ENCODE measurements at regions of chr6 and their contacts with region 1.

Region 1: GRCh38 chr6:44172731-44173500 is 14.3 kb downstream of the CAPN11 start:
- DNase-seq: peak; percentile 61 to 95
- H3K4me3 ChIP-seq: no peak overlapping the region
- H3K27ac ChIP-seq: no peak overlapping the region
- H3K4me1 ChIP-seq: peaks cover 3 to 14% of the 10 kb centered on the region in 2 donors
- H3K27me3 ChIP-seq: no peaks in the 10 kb centered on the region
- CTCF ChIP-seq: peak; percentile 93 to 94 (median 93)

Region 2: GRCh38 chr6:44127186-44128019 is 45.5 kb before region 1 on chr6 and contains the starts of genes MRPL14 and TMEM63B:
- intact Hi-C with region 1: no loop called
- DNase-seq: peak; percentile 43 to 91
- H3K4me3 ChIP-seq: peak within 1 kb of the TSS; percentile 85 to 86
- H3K27ac ChIP-seq: peak within 1 kb of the TSS; percentile 81 to 84
- H3K4me1 ChIP-seq: peaks cover 0 to 23% of the 10 kb centered on the region in 2 donors
- H3K27me3 ChIP-seq: no peaks in the 10 kb centered on the region
- CTCF ChIP-seq: no peak
- total RNA-seq, gene MRPL14: 61.8 TPM
- total RNA-seq, gene TMEM63B: 9.6 TPM

Region 3: DNA sequence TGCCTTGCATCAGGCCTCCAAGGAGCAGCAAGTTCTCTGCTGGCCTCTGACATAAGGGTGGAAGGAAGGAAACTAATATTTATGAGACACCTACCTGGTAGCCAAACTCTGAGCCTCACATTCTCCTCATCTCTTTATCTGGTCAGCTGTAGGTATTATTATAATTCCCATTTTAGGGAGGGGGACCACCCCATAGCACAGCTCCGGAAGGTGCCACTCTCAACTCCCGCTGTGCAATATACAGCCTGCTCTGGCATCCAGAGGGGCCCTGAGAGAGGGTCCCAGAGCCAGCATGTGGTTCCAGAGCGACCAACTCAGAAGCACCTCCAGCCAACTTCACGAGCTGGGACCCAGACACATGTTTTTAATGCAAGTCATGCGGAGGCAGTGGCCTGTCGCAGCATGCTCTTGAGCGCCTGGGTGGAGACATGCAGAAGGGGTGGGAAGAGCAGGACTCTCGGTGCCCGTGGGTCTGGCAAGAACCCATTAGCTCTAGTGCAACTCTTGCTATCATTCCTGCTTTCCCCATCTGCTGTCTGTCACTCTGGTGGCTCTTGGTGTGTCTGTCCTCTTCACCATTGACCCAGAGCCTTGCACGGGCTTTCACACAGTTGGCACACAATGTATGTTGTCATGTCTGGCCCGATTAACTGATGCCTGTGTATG is 28.9 kb after region 1 on chr6:
- intact Hi-C with region 1: loop called (anchors 2 kb)
- DNase-seq: no peak
- H3K4me3 ChIP-seq: no peak overlapping the region
- H3K27ac ChIP-seq: no peak overlapping the region
- H3K4me1 ChIP-seq: peaks cover 0 to 10% of the 10 kb centered on the region in 2 donors
- H3K27me3 ChIP-seq: no peaks in the 10 kb centered on the region
- CTCF ChIP-seq: no peak

Region 4: GRCh38 chr6:44237813-44238433 is 65.0 kb after region 1 on chr6:
- intact Hi-C with region 1: loop called (anchors 1 kb)
- DNase-seq: peak; percentile 72 to 93
- H3K4me3 ChIP-seq: peak overlapping the region; percentile 51 to 79
- H3K27ac ChIP-seq: peak overlapping the region; percentile 97 to 100
- H3K4me1 ChIP-seq: peaks cover 25 to 50% of the 10 kb centered on the region in 2 donors
- H3K27me3 ChIP-seq: no peaks in the 10 kb centered on the region
- CTCF ChIP-seq: peak; percentile 97 to 99 (median 98)

Region 5: DNA sequence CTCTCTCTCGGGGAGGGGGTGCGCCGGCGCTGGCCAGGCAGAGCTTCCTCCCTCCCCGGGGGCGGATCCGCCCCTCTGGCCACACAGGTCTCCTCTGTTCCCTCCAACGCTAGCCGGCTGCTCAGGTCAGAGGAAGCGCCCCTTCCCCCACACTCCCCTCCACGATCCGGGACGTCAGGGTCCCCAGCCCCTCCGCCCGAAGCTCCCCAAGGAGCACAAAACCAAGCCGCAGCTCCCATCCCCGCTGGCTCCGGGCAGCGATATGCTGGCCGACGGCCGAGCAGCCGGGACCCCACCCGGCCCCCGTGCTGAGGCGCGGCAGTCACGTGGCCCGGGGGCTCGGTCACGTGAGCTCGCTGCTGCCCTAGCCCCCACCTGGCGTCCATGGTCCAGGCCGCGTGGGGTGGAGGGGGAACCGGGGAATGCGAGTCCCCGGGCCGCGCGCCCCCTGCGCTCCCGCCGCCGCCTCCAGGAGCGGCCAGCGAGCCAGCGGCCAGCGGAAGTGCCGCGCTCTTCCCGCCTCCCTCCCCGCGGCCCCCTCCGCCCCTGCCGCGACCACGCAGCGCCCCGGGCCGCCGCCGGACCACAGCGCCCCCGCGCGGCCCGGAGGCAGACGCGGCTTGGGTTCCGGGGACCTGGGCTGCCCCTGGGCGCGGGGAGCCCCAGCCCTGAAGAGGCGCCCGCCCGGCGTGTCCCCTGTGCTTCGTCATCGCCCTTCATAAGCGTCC is 84.3 kb after region 1 on chr6 and contains the start of gene SLC35B2:
- intact Hi-C with region 1: loop called (anchors 1 kb)
- DNase-seq: peak in 1 of 2 donors; percentile 81
- H3K4me3 ChIP-seq: peak within 1 kb of the TSS; percentile 77 to 79
- H3K27ac ChIP-seq: peak within 1 kb of the TSS; percentile 73 to 87
- H3K4me1 ChIP-seq: peaks cover 0 to 13% of the 10 kb centered on the region in 2 donors
- H3K27me3 ChIP-seq: no peaks in the 10 kb centered on the region
- CTCF ChIP-seq: peak in 2 of 3 experiments; percentile 51 to 93
- total RNA-seq, gene SLC35B2: 9.9 TPM

Region 6: DNA sequence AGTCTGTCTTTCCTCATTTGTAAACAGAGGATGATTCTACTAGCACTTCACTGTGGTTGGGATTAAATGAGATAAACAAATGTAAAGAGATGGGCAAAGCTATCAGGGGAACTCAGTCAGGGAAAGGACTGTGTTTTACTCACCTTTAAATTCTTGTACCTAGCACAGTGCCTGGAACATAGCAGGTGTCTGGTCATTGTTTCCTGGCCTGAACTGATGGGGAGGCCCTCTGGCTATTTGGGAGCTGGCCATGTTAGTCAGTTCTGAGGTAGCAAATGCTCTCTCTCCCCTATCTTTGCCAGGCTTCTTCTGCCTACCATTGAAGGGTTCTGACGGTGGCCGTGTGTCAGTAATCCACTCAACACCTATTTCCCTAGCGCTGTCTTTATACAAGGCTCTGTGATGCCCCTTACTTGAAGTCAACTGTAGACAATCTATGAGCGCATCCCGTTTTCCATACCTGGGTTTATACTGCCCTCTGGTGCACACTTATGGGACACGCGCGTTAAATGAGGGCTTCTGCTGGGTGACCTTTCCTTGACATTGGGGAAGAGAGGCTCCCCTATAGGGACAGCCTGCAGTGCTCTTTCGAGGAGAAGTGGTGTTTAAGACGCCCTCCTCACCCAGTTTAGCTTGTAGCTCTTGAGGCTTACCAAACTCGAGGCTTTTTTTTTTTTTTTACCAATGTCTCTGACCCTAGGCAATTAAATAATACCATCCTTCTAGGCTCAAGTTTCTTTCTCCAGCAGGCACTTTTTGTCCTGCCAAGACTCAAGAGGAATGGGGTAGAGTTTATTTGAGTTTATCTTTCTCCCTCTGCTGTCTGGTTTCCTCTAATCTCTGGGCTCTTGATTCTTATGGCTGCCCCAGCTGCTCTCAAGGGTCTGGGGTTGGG is 165.6 kb after region 1 on chr6:
- intact Hi-C with region 1: loop called (anchors 2 kb)
- DNase-seq: peak in 1 of 2 donors; percentile 76
- H3K4me3 ChIP-seq: no peak overlapping the region
- H3K27ac ChIP-seq: no peak overlapping the region
- H3K4me1 ChIP-seq: no peaks in the 10 kb centered on the region
- H3K27me3 ChIP-seq: peaks cover 3% of the 10 kb centered on the region
- CTCF ChIP-seq: peak; percentile 50 to 67 (median 55)

Region 7: GRCh38 chr6:44833248-44833647 is 660.3 kb after region 1 on chr6:
- intact Hi-C with region 1: no loop called
- DNase-seq: no peak
- H3K4me3 ChIP-seq: no peak overlapping the region
- H3K27ac ChIP-seq: no peak overlapping the region
- H3K4me1 ChIP-seq: no peaks in the 10 kb centered on the region
- H3K27me3 ChIP-seq: no peaks in the 10 kb centered on the region
- CTCF ChIP-seq: no peak

Measured in ascending aorta (tissue), 2 donors.